Dendritic cell treated with granulocyte-macrophage colony-stimulating factor and Interleukin-4, amounts not matched to agents 40 ng/mL and 50 ng/mL, for 4 days (primary cell): ENCODE measurements at regions of chr6 and their contacts with region 1.

Region 1: DNA sequence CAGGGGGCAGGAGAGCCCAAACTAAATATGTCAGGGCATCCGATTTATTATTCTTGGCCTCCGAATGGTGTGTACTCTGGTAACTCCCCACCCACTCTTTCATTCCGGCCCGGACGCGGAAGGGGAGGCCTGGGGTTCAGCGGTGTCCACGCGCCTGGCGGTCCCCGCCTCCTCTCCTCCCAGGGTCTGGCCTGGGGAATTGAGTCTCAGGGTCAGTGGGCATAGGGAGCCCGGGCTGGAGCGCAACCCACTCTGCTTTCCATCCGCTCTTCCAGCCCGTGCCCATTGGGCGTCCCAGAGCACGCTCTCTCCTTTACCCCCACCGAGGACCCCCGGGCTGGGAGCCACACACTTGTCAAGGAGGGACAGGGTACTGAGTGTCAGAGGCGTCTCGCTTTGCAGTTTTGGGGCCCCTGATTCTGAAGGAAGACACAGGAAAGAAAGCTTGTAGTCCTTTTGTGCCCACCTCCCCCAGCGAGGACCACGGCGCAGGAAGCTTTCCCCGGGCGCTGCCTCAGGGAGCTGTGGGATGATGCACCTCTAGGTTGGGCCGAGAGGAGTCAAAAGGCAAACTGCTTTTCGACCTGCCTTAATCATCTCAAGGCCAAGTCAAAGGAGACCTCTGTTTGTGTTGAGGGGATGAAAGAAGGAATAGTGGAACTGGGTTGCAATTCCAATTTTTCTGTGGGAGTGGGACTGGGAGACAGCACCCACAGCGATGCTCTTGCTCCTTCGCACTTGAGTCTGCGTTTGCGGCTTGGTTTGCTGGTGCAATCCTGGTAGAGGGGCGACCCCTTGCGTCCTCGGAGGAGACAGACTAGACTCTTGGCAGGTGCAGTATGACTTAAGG is 2.5 kb downstream of the RSPO3 start:
- H3K4me3 Mint-ChIP-seq: no peak overlapping the region
- H3K27ac Mint-ChIP-seq: no peak overlapping the region
- H3K4me1 Mint-ChIP-seq: peaks cover 30% of the 10 kb centered on the region
- H3K27me3 Mint-ChIP-seq: peaks cover 61% of the 10 kb centered on the region

Region 2: GRCh38 chr6:126361832-126362412 is 759.1 kb before region 1 on chr6:
- intact Hi-C with region 1: loop called (anchors 1 kb)
- H3K4me3 Mint-ChIP-seq: no peak overlapping the region
- H3K27ac Mint-ChIP-seq: no peak overlapping the region
- H3K4me1 Mint-ChIP-seq: no peaks in the 10 kb centered on the region
- H3K27me3 Mint-ChIP-seq: no peaks in the 10 kb centered on the region

Region 3: GRCh38 chr6:126664271-126664670 is 456.7 kb before region 1 on chr6:
- intact Hi-C with region 1: no loop called
- H3K4me3 Mint-ChIP-seq: no peak overlapping the region
- H3K27ac Mint-ChIP-seq: no peak overlapping the region
- H3K4me1 Mint-ChIP-seq: no peaks in the 10 kb centered on the region
- H3K27me3 Mint-ChIP-seq: no peaks in the 10 kb centered on the region

Region 4: GRCh38 chr6:126804332-126805064 is 316.5 kb before region 1 on chr6:
- intact Hi-C with region 1: loop called (anchors 1 kb)
- H3K4me3 Mint-ChIP-seq: no peak overlapping the region
- H3K27ac Mint-ChIP-seq: no peak overlapping the region
- H3K4me1 Mint-ChIP-seq: no peaks in the 10 kb centered on the region
- H3K27me3 Mint-ChIP-seq: peaks cover 3% of the 10 kb centered on the region